HCT116 (cell line): ENCODE measurements at regions of chr15 and their contacts with region 1.

Region 1: GRCh38 chr15:76139368-76140073 is 79.7 kb downstream of the TMEM266 start:
- DNase-seq: peak; percentile 64
- ATAC-seq: peak; percentile 97
- H3K4me3 ChIP-seq: no peak overlapping the region
- H3K27ac ChIP-seq: no peak overlapping the region
- H3K4me1 ChIP-seq: peaks cover 0 to 4% of the 10 kb centered on the region in 2 experiments; a peak in 1 of 4 replicates
- H3K27me3 ChIP-seq: 0 out of 2 replicates have a peak, but pooled peaks cover 3% of the 10 kb centered on the region
- CTCF ChIP-seq: peak; percentile 85 to 93 (median 87)
- POLR2A ChIP-seq: no peak
- RAD21 ChIP-seq: peak; percentile 85

Region 2: DNA sequence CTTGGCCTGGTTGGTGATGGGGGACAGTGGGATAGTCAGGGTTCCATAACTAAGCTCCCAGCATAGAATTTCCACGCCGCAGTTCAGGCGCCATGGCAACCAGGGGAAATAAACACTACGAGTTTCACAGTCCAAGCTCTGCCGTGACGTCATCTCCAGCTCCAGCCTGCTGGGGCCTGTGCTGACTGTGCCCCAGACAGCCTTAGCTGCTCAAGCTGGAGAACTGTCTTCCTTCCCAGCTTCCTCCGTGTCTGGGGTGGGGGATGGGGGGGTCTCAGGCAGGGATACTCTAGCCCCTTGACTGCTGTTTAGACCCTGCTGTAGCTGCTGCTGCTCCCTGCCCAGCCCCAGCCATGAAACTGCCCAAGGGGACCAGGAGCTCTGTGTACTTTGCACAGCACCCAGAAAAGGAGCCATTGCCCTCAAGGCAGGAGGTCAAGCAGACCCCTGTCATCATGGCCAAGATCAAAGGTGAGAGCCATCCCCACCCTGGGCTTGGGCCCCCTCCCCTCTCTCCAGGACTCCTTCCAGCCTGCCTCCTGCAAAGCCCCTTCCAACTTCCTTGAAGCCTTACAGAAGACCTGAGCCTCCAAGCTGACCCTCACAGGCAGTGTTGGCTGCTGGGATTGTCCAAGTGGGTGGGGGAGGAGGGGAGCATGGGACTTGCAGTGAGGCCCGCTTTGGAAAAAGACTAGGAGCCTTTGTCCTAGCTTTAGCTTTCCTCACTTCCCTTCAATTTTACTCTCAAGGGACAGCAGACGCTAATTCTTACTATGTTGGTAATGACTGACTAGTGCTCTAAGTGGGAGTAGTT is 415.5 kb before region 1 on chr15:
- CTCF ChIA-PET with region 1: interaction called, 9 read pairs
- POLR2A ChIA-PET with region 1: no interaction called
- RAD21 ChIA-PET with region 1: interaction called in 1 of 2 experiments, 3 read pairs
- intact Hi-C with region 1: loop called (anchors 10 kb)
- DNase-seq: no peak
- ATAC-seq: no peak
- H3K4me3 ChIP-seq: no peak overlapping the region
- H3K27ac ChIP-seq: no peak overlapping the region
- H3K4me1 ChIP-seq: peaks cover 11 to 29% of the 10 kb centered on the region in 2 experiments; a peak in 3 of 4 replicates
- H3K27me3 ChIP-seq: no peaks in the 10 kb centered on the region
- CTCF ChIP-seq: no peak
- POLR2A ChIP-seq: no peak
- RAD21 ChIP-seq: no peak

Region 3: DNA sequence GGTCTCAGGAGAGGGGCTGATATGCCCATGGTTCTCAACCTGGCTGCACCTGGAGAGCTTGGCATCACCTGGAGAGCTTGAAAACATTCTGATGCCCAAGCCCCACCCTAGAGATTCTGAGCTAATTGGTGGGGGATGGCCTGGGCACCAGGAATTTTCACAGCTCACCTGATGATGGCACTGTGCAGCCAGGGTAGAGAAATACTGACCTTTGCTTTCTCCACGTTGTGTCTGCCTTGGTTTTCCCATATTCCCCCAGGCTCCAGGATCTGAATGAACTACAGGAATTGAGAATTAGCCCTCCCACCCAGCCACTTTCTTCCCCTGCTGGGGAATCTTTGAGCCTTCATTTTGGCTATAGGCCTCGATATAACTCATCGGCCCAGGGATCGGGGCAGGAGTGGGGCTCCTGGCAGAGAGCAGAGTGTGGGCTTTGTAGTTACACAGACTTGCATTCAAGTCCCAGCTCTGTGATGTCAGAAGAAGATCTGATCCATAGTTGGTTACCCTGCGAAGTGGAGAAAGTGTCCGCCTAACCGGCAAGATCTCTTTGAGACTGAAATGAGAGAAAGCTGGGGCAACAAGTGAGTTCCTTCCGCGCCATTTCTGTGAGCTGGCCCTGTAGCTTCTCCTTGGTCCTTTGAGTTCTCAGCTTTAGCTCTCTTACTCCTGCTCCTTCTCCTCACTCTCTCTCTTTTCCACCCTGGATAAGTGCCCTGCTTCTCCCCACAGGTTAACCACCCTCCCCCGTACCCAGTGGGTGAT is 329.4 kb before region 1 on chr15:
- CTCF ChIA-PET with region 1: interaction called, 88 read pairs
- POLR2A ChIA-PET with region 1: interaction called, 7 read pairs
- RAD21 ChIA-PET with region 1: interaction called, 14 to 17 read pairs
- intact Hi-C with region 1: loop called (anchors 1 kb)
- DNase-seq: peak; percentile 45
- ATAC-seq: peak; percentile 97
- H3K4me3 ChIP-seq: no peak overlapping the region
- H3K27ac ChIP-seq: no peak overlapping the region
- H3K4me1 ChIP-seq: peaks cover 0 to 7% of the 10 kb centered on the region in 2 experiments; a peak in 2 of 4 replicates
- H3K27me3 ChIP-seq: no peaks in the 10 kb centered on the region
- CTCF ChIP-seq: peak; percentile 69 to 78 (median 72)
- POLR2A ChIP-seq: no peak
- RAD21 ChIP-seq: peak; percentile 91

Region 4: DNA sequence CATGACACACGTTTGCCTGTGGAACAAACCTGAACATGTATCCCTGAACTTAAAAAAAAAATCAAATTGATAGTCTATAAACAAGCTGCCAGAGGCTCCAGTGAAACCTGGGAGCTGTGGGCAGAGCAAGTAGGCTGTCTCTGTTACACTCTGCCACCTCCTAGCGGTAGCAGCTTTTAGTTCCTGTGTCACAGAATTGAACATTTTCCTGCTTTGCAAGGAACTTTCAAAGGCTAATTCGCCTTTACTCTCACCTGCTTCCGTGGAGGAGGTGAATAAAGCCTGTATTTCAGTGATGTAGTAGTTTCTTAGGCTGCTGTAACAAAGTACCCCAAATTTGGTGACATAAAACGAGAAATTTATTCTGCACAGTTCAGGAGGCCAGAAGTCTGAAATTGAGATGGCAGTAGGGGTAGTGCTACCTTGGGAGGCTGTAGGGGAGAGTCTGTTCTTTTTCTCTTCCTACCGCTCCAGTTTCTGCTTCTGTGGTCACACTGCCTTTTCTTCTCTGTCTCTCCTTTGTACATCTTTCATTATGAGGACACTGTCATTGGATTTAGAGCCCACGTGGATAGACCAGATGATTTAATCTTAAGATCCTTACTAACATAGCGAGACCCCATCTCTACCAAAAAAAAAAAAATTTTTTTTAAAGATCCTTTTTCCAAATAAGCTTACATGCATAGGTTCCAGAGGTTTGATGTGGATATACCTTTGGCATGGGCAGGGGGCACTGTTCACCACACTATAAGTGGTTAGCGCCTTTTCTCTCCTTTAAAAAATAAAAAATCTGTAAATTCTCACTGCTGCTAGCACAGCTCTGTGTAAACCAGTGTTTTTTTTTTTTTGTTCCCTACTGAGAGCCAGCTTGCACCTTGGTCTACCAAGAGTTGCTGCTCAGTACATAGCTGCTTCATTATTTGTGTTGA is 210.6 kb before region 1 on chr15:
- CTCF ChIA-PET with region 1: interaction called, 42 read pairs
- POLR2A ChIA-PET with region 1: no interaction called
- RAD21 ChIA-PET with region 1: interaction called in 1 of 2 experiments, 3 read pairs
- intact Hi-C with region 1: loop called (anchors 1 kb)
- DNase-seq: peak; percentile 10
- ATAC-seq: peak; percentile 78
- H3K4me3 ChIP-seq: no peak overlapping the region
- H3K27ac ChIP-seq: no peak overlapping the region
- H3K4me1 ChIP-seq: no peaks in the 10 kb centered on the region
- H3K27me3 ChIP-seq: no peaks in the 10 kb centered on the region
- CTCF ChIP-seq: peak; percentile 26 to 55 (median 41); a peak in 4 of 6 replicates
- POLR2A ChIP-seq: no peak
- RAD21 ChIP-seq: peak; percentile 37; the same call in 1 of the 2 replicates

Region 5: DNA sequence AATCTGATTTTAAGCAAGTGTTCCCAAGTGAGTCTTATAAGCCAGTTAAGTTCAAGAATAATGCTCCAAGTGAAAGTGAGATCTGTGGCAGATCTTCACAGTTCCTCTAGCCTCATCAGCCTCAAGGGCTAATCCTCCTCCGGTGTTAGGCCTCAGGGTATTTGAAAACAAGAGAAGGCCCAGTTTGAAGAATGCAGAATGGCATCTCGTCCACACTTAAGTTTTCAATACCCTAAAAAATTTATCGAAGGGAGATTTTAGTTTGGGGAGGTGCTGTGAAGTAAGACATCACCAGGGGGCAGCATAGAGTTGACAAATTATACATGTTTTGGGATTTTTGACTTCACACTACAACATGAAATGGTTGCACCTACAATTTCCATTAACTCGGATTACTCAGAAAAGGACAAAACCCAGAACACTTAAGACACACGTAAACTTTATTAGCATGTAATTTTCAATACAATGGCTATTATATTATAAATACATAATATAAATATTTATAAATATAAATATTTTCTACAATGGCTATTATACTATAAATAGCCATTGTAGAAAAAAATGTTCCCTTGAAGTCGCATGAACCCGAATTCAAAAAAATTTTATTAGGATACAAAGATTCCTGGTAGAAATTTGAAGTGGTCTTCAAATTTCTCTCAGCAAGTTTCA is 82.1 kb before region 1 on chr15:
- CTCF ChIA-PET with region 1: interaction called, 97 read pairs
- POLR2A ChIA-PET with region 1: interaction called, 3 read pairs
- RAD21 ChIA-PET with region 1: interaction called, 6 to 8 read pairs
- intact Hi-C with region 1: loop called (anchors 1 kb)
- DNase-seq: no peak
- ATAC-seq: peak; percentile 37; the same call in 1 of the 2 replicates
- H3K4me3 ChIP-seq: peak overlapping the region; percentile 29 to 54
- H3K27ac ChIP-seq: no peak overlapping the region
- H3K4me1 ChIP-seq: peaks cover 9 to 30% of the 10 kb centered on the region in 2 experiments
- H3K27me3 ChIP-seq: peaks cover 13% of the 10 kb centered on the region
- CTCF ChIP-seq: peak; percentile 69 to 75 (median 73)
- POLR2A ChIP-seq: no peak
- RAD21 ChIP-seq: peak; percentile 61

Region 6: GRCh38 chr15:76150971-76151598 is 11.6 kb after region 1 on chr15:
- CTCF ChIA-PET with region 1: interaction called, 24 read pairs
- POLR2A ChIA-PET with region 1: interaction called, 3 read pairs
- RAD21 ChIA-PET with region 1: no interaction called
- intact Hi-C with region 1: no loop called
- DNase-seq: peak; percentile 42
- ATAC-seq: peak; percentile 92
- H3K4me3 ChIP-seq: no peak overlapping the region
- H3K27ac ChIP-seq: no peak overlapping the region
- H3K4me1 ChIP-seq: peaks cover 0 to 18% of the 10 kb centered on the region in 2 experiments; a peak in 2 of 4 replicates
- H3K27me3 ChIP-seq: no peaks in the 10 kb centered on the region
- CTCF ChIP-seq: peak; percentile 70 to 90 (median 84)
- POLR2A ChIP-seq: no peak
- RAD21 ChIP-seq: peak; percentile 74

Region 7: DNA sequence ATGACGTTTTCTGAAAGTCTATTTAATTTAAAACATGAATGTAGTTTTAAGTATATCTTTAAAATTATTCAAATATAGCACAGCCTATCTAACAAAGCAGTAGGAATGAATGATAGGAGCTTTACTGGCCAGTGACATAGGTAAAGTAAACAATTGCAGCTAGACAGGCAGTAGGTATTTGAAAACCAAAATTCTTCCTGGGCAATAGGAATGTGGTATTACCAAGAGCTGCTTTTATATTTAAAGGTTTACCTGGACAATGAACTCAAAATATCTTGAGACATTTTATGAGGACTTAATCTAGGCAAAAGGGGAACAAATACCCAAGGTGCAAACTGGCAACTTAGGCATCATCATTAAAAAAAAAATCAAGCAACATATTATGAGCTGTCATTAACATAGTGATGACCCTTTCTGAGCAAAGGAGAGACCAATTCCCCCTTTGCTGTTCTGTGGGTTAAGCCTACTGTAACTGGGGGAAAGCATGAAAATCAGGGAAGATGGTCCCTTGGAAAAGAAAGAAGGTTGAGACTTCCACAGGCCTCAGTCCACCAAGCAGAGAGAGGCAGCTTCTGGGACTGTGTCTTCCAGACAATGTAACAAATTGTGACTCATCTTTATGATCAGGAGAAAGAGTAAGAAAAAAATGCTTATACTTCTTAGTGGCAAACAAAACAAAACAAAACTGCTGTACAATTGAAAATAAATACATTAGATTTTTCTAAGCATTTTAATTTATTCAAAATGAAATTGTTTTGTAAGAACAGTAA is 210.0 kb after region 1 on chr15:
- CTCF ChIA-PET with region 1: no interaction called
- POLR2A ChIA-PET with region 1: no interaction called
- RAD21 ChIA-PET with region 1: no interaction called
- intact Hi-C with region 1: no loop called
- DNase-seq: no peak
- ATAC-seq: no peak
- H3K4me3 ChIP-seq: no peak overlapping the region
- H3K27ac ChIP-seq: no peak overlapping the region
- H3K4me1 ChIP-seq: peaks cover 5 to 11% of the 10 kb centered on the region in 2 experiments; a peak in 2 of 4 replicates
- H3K27me3 ChIP-seq: no peaks in the 10 kb centered on the region
- CTCF ChIP-seq: no peak
- POLR2A ChIP-seq: no peak
- RAD21 ChIP-seq: no peak